Activated CD4-positive, alpha-beta memory T cell treated with anti-CD3 and anti-CD28 coated beads for 36 hours (primary cell): ENCODE measurements at regions of chr5 and their contacts with region 1.

Region 1: GRCh38 chr5:132238169-132238744 is 10.6 kb upstream of the P4HA2 start:
- DNase-seq: peak; percentile 83
- H3K4me3 Mint-ChIP-seq: no peak overlapping the region
- H3K27ac Mint-ChIP-seq: no peak overlapping the region
- H3K4me1 Mint-ChIP-seq: no peaks in the 10 kb centered on the region
- H3K27me3 Mint-ChIP-seq: peaks cover 3% of the 10 kb centered on the region

Region 2: DNA sequence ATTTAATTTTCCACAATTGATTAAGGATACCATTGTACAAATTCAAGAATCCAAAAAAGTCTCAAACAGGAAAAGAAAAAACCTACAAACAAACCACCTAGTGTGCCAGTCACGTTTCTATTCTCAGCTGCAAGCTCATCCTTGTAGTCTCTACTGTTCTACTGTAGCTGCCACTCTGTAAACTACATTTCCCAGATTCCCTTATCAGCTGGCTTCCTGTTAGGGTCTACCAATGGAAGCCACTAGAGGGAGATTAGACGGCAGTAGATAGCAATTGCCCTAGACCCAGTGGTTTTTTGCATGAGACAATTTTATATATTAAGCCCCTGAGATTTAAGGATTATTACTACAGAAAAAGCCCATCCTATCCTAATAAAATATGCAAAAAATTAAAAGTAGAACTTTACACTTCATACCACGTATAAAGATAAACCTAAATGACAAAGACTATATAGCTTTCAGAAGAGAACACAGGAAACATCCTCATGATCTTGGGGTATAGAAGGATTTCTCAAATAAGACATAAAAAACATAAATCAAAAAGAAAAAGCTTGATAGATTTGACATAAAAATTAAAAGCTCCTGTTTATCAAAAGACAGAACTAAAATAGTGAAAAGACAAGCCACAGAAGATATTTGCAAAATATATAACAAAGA is 48.0 kb before region 1 on chr5:
- CTCF ChIA-PET with region 1: interaction called, 16 read pairs
- POLR2A ChIA-PET with region 1: no interaction called
- intact Hi-C with region 1: no loop called
- DNase-seq: no peak
- H3K4me3 Mint-ChIP-seq: no peak overlapping the region
- H3K27ac Mint-ChIP-seq: no peak overlapping the region
- H3K4me1 Mint-ChIP-seq: peaks cover 7% of the 10 kb centered on the region
- H3K27me3 Mint-ChIP-seq: peaks cover 8% of the 10 kb centered on the region

Region 3: GRCh38 chr5:132227485-132228240 is 10.6 kb before region 1 on chr5 and contains the start of gene P4HA2:
- CTCF ChIA-PET with region 1: interaction called, 76 read pairs
- POLR2A ChIA-PET with region 1: no interaction called
- intact Hi-C with region 1: no loop called
- DNase-seq: peak; percentile 67
- H3K4me3 Mint-ChIP-seq: peak within 1 kb of the TSS; percentile 24
- H3K27ac Mint-ChIP-seq: no peak within 1 kb of the TSS
- H3K4me1 Mint-ChIP-seq: peaks cover 9% of the 10 kb centered on the region
- H3K27me3 Mint-ChIP-seq: peaks cover 17% of the 10 kb centered on the region
- total RNA-seq, gene P4HA2: 6.0 to 6.1 TPM

Region 4: DNA sequence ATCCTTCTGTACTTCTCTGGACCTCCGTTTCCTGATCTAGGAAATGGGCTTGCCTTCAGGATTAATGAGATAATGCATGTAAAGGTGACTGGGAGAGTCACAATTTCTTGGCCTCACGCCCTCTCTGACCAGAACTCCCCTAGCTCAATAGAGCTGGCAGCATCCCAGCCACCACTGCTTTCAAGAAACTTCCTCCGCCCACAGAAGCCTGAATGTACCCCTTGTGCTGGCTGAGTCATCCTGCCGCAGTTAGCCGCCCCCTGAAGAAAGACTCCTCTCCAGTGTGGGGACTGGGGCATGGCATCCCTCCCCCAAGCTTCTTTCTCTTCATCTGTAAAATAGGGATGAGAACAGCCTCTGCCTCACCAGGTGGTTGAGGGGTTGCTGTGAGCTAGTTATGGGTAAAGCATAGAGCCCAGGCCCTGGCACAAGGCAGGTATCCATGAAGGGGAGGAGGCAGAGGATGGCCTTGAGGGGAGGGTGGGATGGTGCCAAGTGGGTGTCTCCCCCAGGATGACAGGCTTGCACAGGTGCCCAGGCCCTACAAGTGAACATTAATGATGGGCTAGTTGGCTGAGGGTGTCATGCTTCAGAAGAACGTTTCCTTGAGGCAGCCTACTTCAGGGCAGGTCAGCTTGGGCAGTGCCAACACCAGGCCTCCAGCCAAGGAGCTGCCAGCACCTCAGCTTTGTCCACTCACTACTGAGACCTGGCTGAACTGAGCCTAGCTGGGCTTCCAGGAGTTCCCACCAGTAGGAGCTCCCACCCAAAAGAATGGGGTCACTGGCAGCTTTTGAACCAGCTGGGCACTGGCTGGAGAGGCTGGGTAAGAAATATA is 22.7 kb after region 1 on chr5:
- CTCF ChIA-PET with region 1: interaction called, 16 read pairs
- POLR2A ChIA-PET with region 1: interaction called, 3 read pairs
- intact Hi-C with region 1: no loop called
- DNase-seq: peak; percentile 57
- H3K4me3 Mint-ChIP-seq: no peak overlapping the region
- H3K27ac Mint-ChIP-seq: no peak overlapping the region
- H3K4me1 Mint-ChIP-seq: peaks cover 15% of the 10 kb centered on the region
- H3K27me3 Mint-ChIP-seq: peaks cover 13% of the 10 kb centered on the region

Region 5: DNA sequence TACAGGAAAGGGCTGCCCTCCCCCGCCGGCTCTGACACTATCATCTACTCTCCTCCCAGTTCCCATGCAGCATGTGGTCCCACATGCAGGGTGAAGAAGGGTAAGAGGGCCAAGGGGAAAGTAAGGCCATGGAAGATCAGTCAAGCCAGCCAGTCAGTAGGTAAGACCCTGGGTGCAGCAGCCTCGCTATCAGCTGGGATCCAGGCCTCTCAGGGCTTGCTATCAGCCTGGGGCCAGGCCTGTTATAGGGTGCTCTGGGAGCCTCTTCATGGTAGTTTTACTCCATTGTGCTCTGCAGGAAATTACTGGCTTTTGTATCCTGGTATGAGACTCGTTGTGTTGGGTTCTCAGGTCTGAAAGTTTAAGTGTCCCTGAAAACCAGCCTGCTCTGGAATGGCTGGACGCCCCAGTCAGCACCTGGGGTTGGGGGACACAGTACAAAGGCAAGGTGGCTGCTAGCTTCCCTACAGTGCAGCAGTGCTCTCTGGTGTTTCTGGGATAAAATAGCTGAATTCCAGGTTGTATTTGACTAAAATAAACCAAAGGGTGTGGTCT is 77.3 kb after region 1 on chr5:
- CTCF ChIA-PET with region 1: interaction called, 10 read pairs
- POLR2A ChIA-PET with region 1: no interaction called
- intact Hi-C with region 1: no loop called
- DNase-seq: no peak
- H3K4me3 Mint-ChIP-seq: no peak overlapping the region
- H3K27ac Mint-ChIP-seq: no peak overlapping the region
- H3K4me1 Mint-ChIP-seq: no peaks in the 10 kb centered on the region
- H3K27me3 Mint-ChIP-seq: no peaks in the 10 kb centered on the region